ENCODE measurements at regions of chr20 and their contacts with region 1.

Region 1: DNA sequence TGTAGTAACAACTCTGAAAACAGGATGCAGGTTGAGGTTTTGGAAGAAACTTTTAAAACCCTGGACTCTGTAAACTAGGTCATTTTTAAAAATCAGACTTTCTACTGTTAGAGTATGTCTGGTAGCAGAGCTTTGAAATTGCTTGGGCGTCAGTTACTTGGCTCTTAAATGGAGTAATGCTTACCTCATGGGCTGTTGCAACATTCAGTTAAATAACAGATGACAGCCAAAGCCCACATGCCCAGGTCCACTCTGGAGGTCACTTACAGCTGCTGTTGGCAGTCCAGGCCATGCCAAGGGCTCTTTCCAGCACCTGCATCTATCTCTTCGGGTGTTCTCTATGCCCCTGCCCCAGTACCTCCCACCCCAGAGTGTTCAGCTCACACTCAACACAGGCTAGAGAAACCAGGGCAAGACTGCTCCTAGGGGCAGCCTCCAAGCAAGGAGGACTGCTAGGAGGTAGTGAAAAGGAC is 96.4 kb downstream of the BANF2 start:
- DNase-seq: peak; percentile 66 to 80
- H3K4me3 ChIP-seq: no peak overlapping the region
- H3K27ac ChIP-seq: peak overlapping the region; percentile 68 to 71
- H3K4me1 ChIP-seq: peaks cover 0 to 30% (median 26%) of the 10 kb centered on the region in 4 donors
- H3K27me3 ChIP-seq: no peaks in the 10 kb centered on the region
- CTCF ChIP-seq: no peak

Region 2: GRCh38 chr20:17682103-17682888 is 113.8 kb before region 1 on chr20 and contains the start of gene RRBP1:
- intact Hi-C with region 1: loop called (anchors 10 kb)
- DNase-seq: peak; percentile 98 to 99
- H3K4me3 ChIP-seq: peak within 1 kb of the TSS; percentile 79 to 90
- H3K27ac ChIP-seq: peak within 1 kb of the TSS; percentile 82 to 87
- H3K4me1 ChIP-seq: peaks cover 0 to 18% (median 12%) of the 10 kb centered on the region in 4 donors
- H3K27me3 ChIP-seq: peaks cover 0 to 6% of the 10 kb centered on the region in 2 donors
- CTCF ChIP-seq: peak; percentile 58 to 64

Region 3: DNA sequence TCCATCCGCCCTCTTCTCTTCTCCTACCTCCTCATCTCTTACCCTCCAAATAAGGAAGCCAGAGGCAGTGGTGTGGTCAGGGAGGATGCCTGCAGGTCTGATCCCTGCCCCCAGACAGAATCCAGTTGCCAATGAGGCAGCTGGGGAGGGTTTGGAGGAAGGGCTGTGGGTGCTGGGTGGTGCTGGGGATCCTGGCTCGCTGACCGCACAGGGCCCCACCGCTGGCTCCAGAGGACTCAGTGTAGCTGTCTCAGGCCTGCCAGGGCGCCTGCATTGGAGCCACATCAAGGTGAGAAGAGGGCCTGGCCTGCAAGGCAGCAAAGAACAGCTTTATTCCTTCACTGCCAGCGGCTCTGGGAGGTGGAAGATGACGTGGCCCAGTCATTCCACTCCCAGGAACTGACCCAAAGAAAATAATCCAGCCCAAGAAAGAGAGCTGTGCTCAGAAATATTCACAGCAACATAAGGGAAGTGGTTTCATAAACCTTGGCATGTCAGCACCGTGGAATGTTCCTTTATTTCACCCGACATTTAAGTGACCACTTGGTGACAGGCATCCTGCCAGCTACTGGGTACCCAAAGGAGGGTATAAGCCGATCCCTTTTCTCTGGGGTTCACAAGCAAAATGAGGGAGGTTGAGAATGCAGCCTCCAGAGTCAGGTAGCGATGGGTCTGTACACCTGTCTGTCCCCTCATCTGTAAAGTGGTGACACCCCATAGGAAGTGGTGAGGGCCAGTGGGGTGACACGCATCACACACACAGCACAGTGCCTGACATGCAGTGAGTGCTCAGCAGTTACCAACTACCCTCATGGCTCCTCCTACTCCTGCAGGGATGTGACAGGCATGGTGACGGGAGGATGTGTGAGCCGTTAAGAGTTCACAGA is 47.4 kb after region 1 on chr20:
- intact Hi-C with region 1: loop called (anchors 10 kb)
- DNase-seq: peak; percentile 72 to 92
- H3K4me3 ChIP-seq: no peak overlapping the region
- H3K27ac ChIP-seq: peak overlapping the region; percentile 75 to 82
- H3K4me1 ChIP-seq: peaks cover 0 to 36% (median 26%) of the 10 kb centered on the region in 4 donors
- H3K27me3 ChIP-seq: no peaks in the 10 kb centered on the region
- CTCF ChIP-seq: no peak

Region 4: DNA sequence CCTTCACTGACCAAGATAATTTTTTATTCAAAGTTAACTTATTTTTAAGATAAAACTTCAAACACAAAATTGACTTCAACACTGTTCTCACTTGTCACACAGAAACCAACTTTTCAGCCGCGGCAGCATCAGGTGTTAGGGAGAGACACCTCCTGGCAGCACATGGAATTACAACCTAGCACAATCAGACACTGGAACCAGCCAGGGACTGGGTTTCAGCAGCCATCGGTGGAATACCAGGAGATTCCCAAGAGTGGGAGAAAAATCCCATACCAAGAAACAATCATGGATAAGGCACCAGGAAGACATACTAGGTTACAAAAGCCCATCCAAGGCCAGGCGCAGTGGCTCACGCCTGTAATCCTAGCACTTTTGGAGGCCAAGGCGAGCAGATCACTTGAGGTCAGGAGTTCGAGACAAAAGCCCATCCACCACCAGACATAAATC is 102.4 kb after region 1 on chr20:
- intact Hi-C with region 1: loop called (anchors 10 kb)
- DNase-seq: peak; percentile 83 to 87
- H3K4me3 ChIP-seq: no peak overlapping the region
- H3K27ac ChIP-seq: no peak overlapping the region
- H3K4me1 ChIP-seq: peaks cover 0 to 24% (median 13%) of the 10 kb centered on the region in 4 donors
- H3K27me3 ChIP-seq: no peaks in the 10 kb centered on the region
- CTCF ChIP-seq: peak; percentile 92 to 93